Aorta (tissue), 5 donors: ENCODE measurements at regions of chr14 and their contacts with region 1.

Region 1: GRCh38 chr14:96275177-96276112 is 19.4 kb downstream of the BDKRB1 start:
- DNase-seq: peak; percentile 72 to 93
- ATAC-seq: peak; percentile 73
- H3K4me3 ChIP-seq: no peak overlapping the region
- H3K27ac ChIP-seq: no peak overlapping the region
- H3K4me1 ChIP-seq: no peaks in the 10 kb centered on the region
- H3K27me3 ChIP-seq: no peaks in the 10 kb centered on the region

Region 2: GRCh38 chr14:96001866-96002497 is 273.5 kb before region 1 on chr14:
- intact Hi-C with region 1: loop called (anchors 5 kb)
- DNase-seq: no peak
- ATAC-seq: no peak
- H3K4me3 ChIP-seq: no peak overlapping the region
- H3K27ac ChIP-seq: no peak overlapping the region
- H3K4me1 ChIP-seq: no peaks in the 10 kb centered on the region
- H3K27me3 ChIP-seq: no peaks in the 10 kb centered on the region

Region 3: DNA sequence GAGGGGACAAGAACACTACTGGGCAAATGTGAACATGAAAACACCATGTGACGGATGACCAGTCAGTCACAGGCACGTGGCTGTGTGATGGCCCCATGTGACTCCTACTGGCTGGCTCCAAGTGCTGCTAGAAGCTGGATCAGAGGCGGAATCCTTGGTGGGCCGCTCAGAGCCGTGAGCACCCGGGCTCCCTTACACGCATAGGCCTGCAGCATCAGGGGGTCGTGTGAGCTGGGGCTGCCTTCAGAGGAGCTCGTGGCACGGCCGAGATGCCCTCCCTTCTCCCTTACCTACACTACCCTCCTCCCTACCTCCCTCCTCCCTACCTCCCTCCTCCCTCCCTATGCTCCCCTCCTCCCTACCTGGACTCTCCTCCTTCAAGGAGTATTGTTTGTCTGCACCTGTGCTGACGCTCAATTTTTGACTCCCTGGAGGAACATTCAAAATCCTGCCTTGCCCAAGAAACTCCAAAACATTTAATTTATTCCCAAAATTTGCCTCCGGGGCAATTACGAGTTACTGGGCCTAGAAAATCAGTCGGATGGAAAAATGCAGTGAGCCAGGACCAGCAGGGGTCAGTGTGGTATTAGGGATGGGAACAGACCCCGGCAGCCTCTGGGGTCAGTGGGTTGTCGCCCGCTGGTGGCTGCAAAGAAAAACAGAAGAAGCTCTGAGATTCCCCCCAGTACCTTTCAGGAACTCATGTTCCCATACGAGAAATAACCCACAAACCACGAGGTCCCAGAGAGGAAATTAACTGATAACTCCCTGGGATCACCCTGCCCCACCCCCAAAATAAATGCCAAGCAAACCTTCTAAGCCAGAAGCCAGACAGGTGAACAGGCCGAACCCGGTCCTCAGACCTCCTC is 175.1 kb before region 1 on chr14:
- intact Hi-C with region 1: loop called (anchors 2 kb)
- DNase-seq: peak; percentile 75 to 90
- ATAC-seq: peak; percentile 65
- H3K4me3 ChIP-seq: no peak overlapping the region
- H3K27ac ChIP-seq: no peak overlapping the region
- H3K4me1 ChIP-seq: no peaks in the 10 kb centered on the region
- H3K27me3 ChIP-seq: no peaks in the 10 kb centered on the region